Mammary epithelial cell (primary cell): ENCODE measurements at regions of chr13 and their contacts with region 1.

Region 1: GRCh38 chr13:114024603-114025404 is 50.9 kb upstream of the C13orf46 start:
- DNase-seq: no peak
- H3K4me3 ChIP-seq: no peak overlapping the region
- H3K27ac ChIP-seq: no peak overlapping the region
- H3K4me1 ChIP-seq: no peaks in the 10 kb centered on the region
- H3K27me3 ChIP-seq: no peaks in the 10 kb centered on the region
- CTCF ChIP-seq: no peak

Region 2: GRCh38 chr13:114124921-114125320 is 100.1 kb after region 1 on chr13:
- CTCF ChIA-PET with region 1: no interaction called
- dilution Hi-C with region 1: loop called (anchors 5 kb)
- in situ Hi-C with region 1: no loop called
- intact Hi-C with region 1: no loop called
- DNase-seq: peak; percentile 79
- H3K4me3 ChIP-seq: no peak overlapping the region
- H3K27ac ChIP-seq: no peak overlapping the region
- H3K4me1 ChIP-seq: no peaks in the 10 kb centered on the region
- H3K27me3 ChIP-seq: no peaks in the 10 kb centered on the region
- CTCF ChIP-seq: no peak